ENCODE measurements at regions of chr2 and their contacts with region 1.

Region 1: DNA sequence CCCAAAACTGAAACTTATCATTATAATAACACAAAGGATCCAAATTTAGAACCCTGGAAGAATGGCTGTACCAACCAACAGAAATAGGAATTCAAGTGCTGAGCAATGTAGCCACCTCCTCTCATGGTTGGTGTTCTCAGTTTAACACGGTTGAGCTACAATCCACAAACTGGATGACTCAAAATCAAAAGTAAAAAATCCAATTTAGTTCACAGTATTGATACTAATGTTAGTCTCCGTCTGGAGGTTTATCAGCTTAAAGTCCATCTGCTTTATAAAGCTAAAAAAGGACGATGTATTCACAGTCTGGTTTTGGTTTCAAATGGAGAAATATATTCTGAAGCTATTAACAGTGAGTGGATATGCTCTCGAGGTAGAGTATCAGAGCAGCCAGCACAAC is 40.5 kb downstream of the CNTNAP5 start:
- DNase-seq: no peak

Region 2: GRCh38 chr2:124027182-124027581 is 38.5 kb before region 1 on chr2:
- intact Hi-C with region 1: loop called in 1 of 2 experiments (anchors 1 kb)
- DNase-seq: no peak

Region 3: DNA sequence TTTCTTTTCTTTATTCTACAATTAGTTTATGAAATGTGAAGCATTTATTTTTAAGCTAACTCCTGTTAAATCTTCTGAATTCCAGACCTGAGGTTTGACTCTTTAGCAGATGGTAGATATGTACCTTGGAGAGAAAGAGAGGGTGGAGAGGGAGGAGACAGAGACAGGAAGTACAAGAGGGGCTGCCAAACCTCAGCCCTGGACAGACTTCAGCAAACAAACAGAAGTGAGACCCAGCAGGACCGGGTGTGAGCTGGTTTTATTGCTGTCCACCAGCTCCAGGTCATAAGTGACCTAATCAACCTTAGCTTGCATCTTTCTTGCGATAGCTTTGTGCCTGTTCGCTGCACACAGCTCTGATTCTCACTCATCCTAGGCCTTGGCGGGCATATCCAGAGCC is 128.1 kb after region 1 on chr2:
- intact Hi-C with region 1: no loop called
- DNase-seq: no peak

Measured in posterior vena cava (tissue), 2 donors.